PC-9 (cell line): ENCODE measurements at regions of chr13 and their contacts with region 1.

Region 1: DNA sequence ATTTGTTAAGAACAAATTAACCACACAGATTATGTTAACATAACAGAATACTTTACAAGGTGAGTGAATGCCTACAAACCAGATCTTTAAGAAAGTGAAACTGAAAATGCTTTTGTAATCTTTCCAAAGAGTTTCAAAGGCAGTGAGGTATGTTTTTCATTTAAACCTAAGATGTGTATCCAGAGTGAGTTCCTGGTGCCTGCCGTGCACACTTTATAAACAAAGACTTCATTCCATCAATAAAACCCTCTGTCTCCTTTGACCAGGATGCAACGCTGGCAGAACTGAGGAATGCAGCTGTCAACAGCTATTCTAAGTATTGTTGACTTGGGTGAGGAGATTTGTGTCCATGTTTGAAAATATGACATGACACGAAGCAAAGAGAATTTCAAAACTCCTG is 344.6 kb downstream of the DNAJC15 start:
- DNase-seq: peak in 1 of 2 experiments; percentile 40
- H3K4me3 ChIP-seq: peak overlapping the region; percentile 40
- H3K27ac ChIP-seq: 0 out of 2 replicates have a peak overlapping the region, but pooled peaks have one; percentile 26
- H3K4me1 ChIP-seq: no peaks in the 10 kb centered on the region
- H3K27me3 ChIP-seq: no peaks in the 10 kb centered on the region
- CTCF ChIP-seq: no peak

Region 2: GRCh38 chr13:43273362-43273761 is 94.6 kb before region 1 on chr13:
- CTCF ChIA-PET with region 1: no interaction called
- POLR2A ChIA-PET with region 1: no interaction called
- intact Hi-C with region 1: no loop called
- DNase-seq: no peak
- H3K4me3 ChIP-seq: no peak overlapping the region
- H3K27ac ChIP-seq: no peak overlapping the region
- H3K4me1 ChIP-seq: peaks cover 24% of the 10 kb centered on the region
- H3K27me3 ChIP-seq: no peaks in the 10 kb centered on the region
- CTCF ChIP-seq: no peak

Region 3: GRCh38 chr13:43405457-43405856 is 37.5 kb after region 1 on chr13:
- CTCF ChIA-PET with region 1: no interaction called
- POLR2A ChIA-PET with region 1: no interaction called
- intact Hi-C with region 1: loop called (anchors 5 kb)
- DNase-seq: peak; percentile 7 to 72
- H3K4me3 ChIP-seq: no peak overlapping the region
- H3K27ac ChIP-seq: no peak overlapping the region
- H3K4me1 ChIP-seq: no peaks in the 10 kb centered on the region
- H3K27me3 ChIP-seq: no peaks in the 10 kb centered on the region
- CTCF ChIP-seq: no peak